ENCODE measurements at regions of chr3 and their contacts with region 1.

Region 1: GRCh38 chr3:47772788-47773187 is 8.9 kb downstream of the SMARCC1 start:
- DNase-seq: no peak
- ATAC-seq: no peak
- H3K4me3 ChIP-seq: no peak overlapping the region
- H3K27ac ChIP-seq: no peak overlapping the region
- H3K4me1 ChIP-seq: no peaks in the 10 kb centered on the region
- H3K27me3 ChIP-seq: no peaks in the 10 kb centered on the region
- CTCF ChIP-seq: no peak

Region 2: GRCh38 chr3:47243419-47244147 is 529.2 kb before region 1 on chr3:
- CTCF ChIA-PET with region 1: no interaction called
- POLR2A ChIA-PET with region 1: no interaction called
- intact Hi-C with region 1: no loop called
- DNase-seq: no peak
- ATAC-seq: no peak
- H3K4me3 ChIP-seq: no peak overlapping the region
- H3K27ac ChIP-seq: no peak overlapping the region
- H3K4me1 ChIP-seq: no peaks in the 10 kb centered on the region
- H3K27me3 ChIP-seq: no peaks in the 10 kb centered on the region
- CTCF ChIP-seq: no peak

Region 3: GRCh38 chr3:47612178-47612577 is 160.6 kb before region 1 on chr3:
- CTCF ChIA-PET with region 1: no interaction called
- POLR2A ChIA-PET with region 1: no interaction called
- intact Hi-C with region 1: no loop called
- DNase-seq: peak; percentile 64
- ATAC-seq: peak; percentile 28; the same call in 1 of the 2 replicates
- H3K4me3 ChIP-seq: no peak overlapping the region
- H3K27ac ChIP-seq: no peak overlapping the region
- H3K4me1 ChIP-seq: peaks cover 18% of the 10 kb centered on the region
- H3K27me3 ChIP-seq: no peaks in the 10 kb centered on the region
- CTCF ChIP-seq: no peak

Region 4: GRCh38 chr3:47731061-47731460 is 41.7 kb before region 1 on chr3:
- CTCF ChIA-PET with region 1: no interaction called
- POLR2A ChIA-PET with region 1: no interaction called
- intact Hi-C with region 1: no loop called
- DNase-seq: no peak
- ATAC-seq: no peak
- H3K4me3 ChIP-seq: no peak overlapping the region
- H3K27ac ChIP-seq: no peak overlapping the region
- H3K4me1 ChIP-seq: peaks cover 7% of the 10 kb centered on the region; the same call in 1 of the 2 replicates
- H3K27me3 ChIP-seq: no peaks in the 10 kb centered on the region
- CTCF ChIP-seq: no peak

Region 5: GRCh38 chr3:47741925-47742324 is 30.9 kb before region 1 on chr3:
- CTCF ChIA-PET with region 1: interaction called, 13 read pairs
- POLR2A ChIA-PET with region 1: interaction called, 3 read pairs
- intact Hi-C with region 1: no loop called
- DNase-seq: no peak
- ATAC-seq: no peak
- H3K4me3 ChIP-seq: no peak overlapping the region
- H3K27ac ChIP-seq: no peak overlapping the region
- H3K4me1 ChIP-seq: no peaks in the 10 kb centered on the region
- H3K27me3 ChIP-seq: no peaks in the 10 kb centered on the region
- CTCF ChIP-seq: no peak

Region 6: DNA sequence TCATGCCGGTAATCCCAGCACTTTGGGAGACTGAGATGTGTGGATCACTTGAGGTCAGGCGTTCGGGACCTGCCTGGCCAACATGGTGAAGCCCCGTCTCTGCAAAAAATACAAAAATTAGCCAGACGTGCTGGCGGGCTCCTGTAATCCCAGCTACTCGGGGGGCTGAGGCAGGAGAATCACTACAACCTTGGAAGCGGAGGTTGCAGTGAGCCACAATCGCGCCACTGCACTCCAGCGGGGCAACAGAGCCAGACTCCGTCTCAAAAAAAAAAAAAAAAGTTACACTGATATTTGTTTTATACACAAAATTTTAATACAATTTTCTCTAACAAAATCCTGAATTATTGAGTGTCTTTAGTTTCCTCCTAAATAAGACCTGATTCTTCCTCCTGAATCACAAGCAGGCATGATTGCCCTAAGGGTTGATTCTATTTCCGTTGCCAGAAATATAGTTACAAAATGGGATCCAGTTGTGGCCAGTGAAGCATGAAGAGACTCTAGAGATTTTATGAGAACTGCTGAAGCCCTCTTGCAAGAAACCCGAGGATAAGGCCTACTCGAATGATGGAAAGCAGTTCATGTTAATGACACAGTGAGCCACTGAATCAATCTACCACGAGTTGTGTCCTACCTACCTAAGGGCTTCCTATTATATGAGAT is 18.5 kb after region 1 on chr3:
- CTCF ChIA-PET with region 1: no interaction called
- POLR2A ChIA-PET with region 1: interaction called, 17 read pairs
- intact Hi-C with region 1: no loop called
- DNase-seq: no peak
- ATAC-seq: no peak
- H3K4me3 ChIP-seq: no peak overlapping the region
- H3K27ac ChIP-seq: no peak overlapping the region
- H3K4me1 ChIP-seq: no peaks in the 10 kb centered on the region
- H3K27me3 ChIP-seq: no peaks in the 10 kb centered on the region
- CTCF ChIP-seq: no peak